K562 (cell line): ENCODE measurements at regions of chr1 and their contacts with region 1.

Region 1: GRCh38 chr1:219917851-219918466 is 10.4 kb downstream of the SLC30A10 start:
- DNase-seq: no peak
- ATAC-seq: no peak
- H3K4me3 ChIP-seq: no peak overlapping the region
- H3K27ac ChIP-seq: no peak overlapping the region
- H3K4me1 ChIP-seq: peaks cover 0 to 3% of the 10 kb centered on the region in 2 experiments; a peak in 3 of 5 replicates
- H3K27me3 ChIP-seq: no peaks in the 10 kb centered on the region
- CTCF ChIP-seq: no peak
- EP300 ChIP-seq: no peak
- POLR2A ChIP-seq: no peak
- RAD21 ChIP-seq: no peak

Region 2: DNA sequence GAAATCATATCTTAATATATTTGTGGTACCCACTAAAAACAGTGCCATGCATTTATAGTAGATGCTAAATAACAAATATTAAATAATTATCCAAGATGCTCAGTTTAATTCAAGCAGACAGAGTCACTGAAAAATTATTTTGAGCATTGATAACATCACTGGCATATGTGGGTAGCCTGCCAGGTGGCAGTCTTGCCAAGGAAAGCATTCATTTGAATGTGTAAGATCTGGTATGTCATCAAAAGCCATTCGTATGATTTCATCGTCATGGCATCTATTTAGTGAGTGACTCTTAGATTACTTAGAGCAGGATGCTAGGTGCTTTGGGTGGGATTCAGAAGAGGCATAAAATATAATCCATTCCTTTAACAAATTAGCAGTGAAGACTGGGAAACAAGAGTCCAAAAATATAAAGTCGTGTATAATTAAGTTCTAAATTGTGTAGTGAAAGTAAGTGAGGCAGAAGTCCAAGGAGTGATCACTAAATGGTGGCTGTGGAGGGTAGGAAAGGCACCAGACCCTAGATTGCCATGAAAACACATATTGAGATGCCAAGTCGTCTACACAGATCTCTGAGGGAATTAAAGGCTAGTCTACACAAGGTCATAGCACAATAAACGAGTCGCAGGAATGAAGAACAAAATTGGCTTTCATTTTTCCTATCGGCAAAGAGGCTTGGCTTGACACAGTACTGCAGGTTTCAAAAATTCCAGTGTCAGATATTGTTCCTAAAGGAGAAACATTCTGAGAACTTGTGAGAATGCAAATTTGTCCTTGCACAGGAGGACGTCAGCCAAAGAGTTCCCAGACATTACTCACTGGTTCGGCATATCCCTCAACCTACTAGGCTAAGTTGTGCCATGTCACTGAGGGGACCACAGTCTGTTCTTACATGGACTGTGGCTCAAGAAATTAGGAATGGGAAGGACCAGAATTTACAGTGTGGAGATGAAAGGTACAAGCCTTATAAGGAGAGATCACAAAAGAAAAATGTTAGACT is 613.4 kb before region 1 on chr1:
- CTCF ChIA-PET with region 1: no interaction called
- POLR2A ChIA-PET with region 1: no interaction called
- in situ Hi-C with region 1: loop called (anchors 10 kb)
- intact Hi-C with region 1: no loop called
- DNase-seq: no peak
- ATAC-seq: no peak
- H3K4me3 ChIP-seq: no peak overlapping the region
- H3K27ac ChIP-seq: no peak overlapping the region
- H3K4me1 ChIP-seq: no peaks in the 10 kb centered on the region
- H3K27me3 ChIP-seq: no peaks in the 10 kb centered on the region
- CTCF ChIP-seq: no peak
- EP300 ChIP-seq: no peak
- POLR2A ChIP-seq: no peak
- RAD21 ChIP-seq: no peak

Region 3: GRCh38 chr1:219876798-219877209 is 41.2 kb before region 1 on chr1:
- CTCF ChIA-PET with region 1: no interaction called
- POLR2A ChIA-PET with region 1: no interaction called
- in situ Hi-C with region 1: no loop called
- intact Hi-C with region 1: no loop called
- DNase-seq: peak; percentile 23 to 85 (median 54)
- ATAC-seq: peak; percentile 87
- H3K4me3 ChIP-seq: no peak overlapping the region
- H3K27ac ChIP-seq: 0 out of 3 replicates have a peak overlapping the region, but pooled peaks have one; percentile 4
- H3K4me1 ChIP-seq: peaks cover 0 to 20% of the 10 kb centered on the region in 2 experiments; a peak in 2 of 5 replicates
- H3K27me3 ChIP-seq: no peaks in the 10 kb centered on the region
- CTCF ChIP-seq: peak; percentile 77 to 91 (median 78)
- EP300 ChIP-seq: peak; percentile 19; the same call in 1 of the 2 replicates
- POLR2A ChIP-seq: no peak
- RAD21 ChIP-seq: peak; percentile 94 to 96

Region 4: GRCh38 chr1:219927956-219928790 is 10.2 kb after region 1 on chr1 and contains the start of gene SLC30A10:
- CTCF ChIA-PET with region 1: no interaction called
- POLR2A ChIA-PET with region 1: interaction called, 21 read pairs
- in situ Hi-C with region 1: no loop called
- intact Hi-C with region 1: no loop called
- DNase-seq: peak; percentile 82 to 90 (median 87)
- ATAC-seq: peak; percentile 88
- H3K4me3 ChIP-seq: peak within 1 kb of the TSS; percentile 66
- H3K27ac ChIP-seq: peak within 1 kb of the TSS; percentile 57
- H3K4me1 ChIP-seq: peaks cover 25 to 26% of the 10 kb centered on the region in 2 experiments; a peak in 4 of 5 replicates
- H3K27me3 ChIP-seq: no peaks in the 10 kb centered on the region
- CTCF ChIP-seq: peak; percentile 36 to 37 (median 36); a peak in 4 of 6 replicates
- EP300 ChIP-seq: no peak
- POLR2A ChIP-seq: peak; percentile 54; the same call in 1 of the 2 replicates
- RAD21 ChIP-seq: peak in 1 of 2 experiments; percentile 38; a peak in 2 of 4 replicates
- polyA plus RNA-seq, gene SLC30A10: 2.6 to 3.8 TPM